Activated CD8-positive, alpha-beta T cell treated with anti-CD3 and anti-CD28 coated beads, Interleukin-2, amount 10 ng/mL, durations not matched to agents 7 days and 5 days (primary cell): ENCODE measurements at regions of chr6 and their contacts with region 1.

Region 1: DNA sequence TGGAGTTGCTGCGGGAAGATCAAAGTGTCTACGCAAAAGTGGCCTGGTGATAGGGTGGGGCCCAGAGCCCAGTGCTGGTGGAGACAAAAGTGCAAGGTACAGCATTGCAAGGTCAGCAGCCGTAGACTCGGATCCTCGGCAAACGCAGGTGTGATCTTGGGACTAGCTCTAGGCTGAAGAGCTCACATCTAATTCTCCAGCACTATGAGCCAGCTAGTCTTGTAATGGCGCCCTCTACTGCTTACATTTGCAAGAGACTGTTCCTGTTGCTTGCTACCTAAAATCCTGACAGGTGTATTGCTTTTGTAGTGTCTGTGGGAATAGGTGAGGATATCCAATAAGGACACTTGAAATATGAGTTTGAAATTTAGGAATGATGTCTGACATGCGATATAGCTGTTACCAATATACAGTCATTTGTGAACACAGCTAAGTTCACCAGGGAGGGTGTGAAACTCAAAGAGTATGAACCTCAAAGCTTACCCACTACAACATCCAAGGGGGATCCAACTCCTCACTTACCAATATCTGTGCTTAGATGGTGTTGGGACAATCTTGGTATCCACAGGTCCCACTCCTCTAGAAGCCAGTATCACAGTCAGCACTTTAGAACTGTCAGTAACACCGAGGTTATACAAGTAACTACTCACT is 58.4 kb downstream of the PDE7B start:
- DNase-seq: peak; percentile 77
- ATAC-seq: peak; percentile 96
- H3K4me3 Mint-ChIP-seq: no peak overlapping the region
- H3K27ac Mint-ChIP-seq: no peak overlapping the region
- H3K4me1 Mint-ChIP-seq: peaks cover 5% of the 10 kb centered on the region
- H3K27me3 Mint-ChIP-seq: no peaks in the 10 kb centered on the region

Region 2: DNA sequence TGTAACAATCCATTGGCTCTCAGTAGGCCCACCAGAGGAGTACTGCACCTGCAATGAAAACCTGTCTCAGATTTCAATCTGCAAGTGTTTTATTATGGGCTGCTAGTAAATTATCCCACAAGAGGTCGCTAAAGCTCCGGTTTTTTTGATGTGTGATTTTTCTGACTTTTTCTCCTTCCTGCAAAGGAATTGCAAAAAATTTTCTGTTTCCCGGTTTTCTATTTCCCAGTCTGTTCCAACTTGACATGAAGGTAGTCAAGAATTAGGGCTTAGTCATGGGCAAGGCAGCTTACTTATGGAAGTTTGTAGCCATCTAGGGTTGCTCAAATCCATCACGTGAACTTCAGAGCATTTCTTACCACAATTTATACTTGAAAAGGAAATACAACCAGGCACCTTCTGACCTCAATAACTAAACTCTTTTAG is 373.9 kb before region 1 on chr6:
- CTCF ChIA-PET with region 1: interaction called, 69 read pairs
- POLR2A ChIA-PET with region 1: no interaction called
- DNase-seq: peak; percentile 48
- ATAC-seq: peak; percentile 72
- H3K4me3 Mint-ChIP-seq: peak overlapping the region; percentile 46
- H3K27ac Mint-ChIP-seq: peak overlapping the region; percentile 43
- H3K4me1 Mint-ChIP-seq: peaks cover 45% of the 10 kb centered on the region
- H3K27me3 Mint-ChIP-seq: no peaks in the 10 kb centered on the region

Region 3: GRCh38 chr6:135680964-135681913 is 228.6 kb before region 1 on chr6:
- CTCF ChIA-PET with region 1: interaction called, 29 read pairs
- POLR2A ChIA-PET with region 1: no interaction called
- DNase-seq: no peak
- ATAC-seq: no peak
- H3K4me3 Mint-ChIP-seq: no peak overlapping the region
- H3K27ac Mint-ChIP-seq: no peak overlapping the region
- H3K4me1 Mint-ChIP-seq: peaks cover 9% of the 10 kb centered on the region
- H3K27me3 Mint-ChIP-seq: no peaks in the 10 kb centered on the region

Region 4: DNA sequence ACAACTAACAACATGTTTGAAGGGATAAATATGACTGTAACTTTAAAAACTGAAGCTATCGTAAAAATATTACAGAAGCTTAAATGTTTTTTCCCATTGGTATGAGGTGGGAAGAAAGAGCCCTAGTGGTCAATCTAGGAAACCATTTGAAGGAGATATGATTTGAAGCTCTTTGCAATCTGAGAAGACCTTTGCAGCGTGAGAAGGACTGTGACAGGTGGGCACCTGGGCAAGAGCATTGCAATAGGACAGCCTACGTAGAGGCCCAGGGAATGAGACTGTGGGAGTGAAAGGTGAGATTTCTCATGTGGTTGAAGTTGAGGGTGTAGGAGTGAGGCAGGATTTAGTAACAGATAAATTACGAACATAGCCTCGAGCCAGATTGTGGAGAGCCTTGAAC is 166.4 kb before region 1 on chr6:
- CTCF ChIA-PET with region 1: interaction called, 10 read pairs
- POLR2A ChIA-PET with region 1: no interaction called
- DNase-seq: no peak
- ATAC-seq: no peak
- H3K4me3 Mint-ChIP-seq: no peak overlapping the region
- H3K27ac Mint-ChIP-seq: no peak overlapping the region
- H3K4me1 Mint-ChIP-seq: no peaks in the 10 kb centered on the region
- H3K27me3 Mint-ChIP-seq: no peaks in the 10 kb centered on the region

Region 5: DNA sequence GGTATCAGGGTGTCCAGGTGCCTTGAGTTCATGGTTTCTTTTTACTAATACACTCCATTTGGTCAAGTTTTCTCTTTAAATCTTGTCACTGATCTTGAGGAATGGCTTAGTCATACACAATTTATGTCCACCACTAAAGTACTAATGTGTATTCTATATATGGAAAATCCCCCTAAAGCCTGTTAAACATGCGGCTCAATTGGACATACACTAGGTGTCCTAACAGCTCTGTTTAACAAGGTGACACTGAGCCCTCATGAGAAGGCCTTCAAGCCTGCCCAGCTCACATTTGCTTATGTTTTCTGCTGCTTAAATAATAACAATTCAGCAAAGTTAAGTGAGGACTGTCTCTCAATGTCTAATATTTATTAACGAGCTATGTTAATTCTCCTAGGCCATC is 26.8 kb before region 1 on chr6:
- CTCF ChIA-PET with region 1: interaction called, 15 read pairs
- POLR2A ChIA-PET with region 1: no interaction called
- DNase-seq: no peak
- ATAC-seq: no peak
- H3K4me3 Mint-ChIP-seq: no peak overlapping the region
- H3K27ac Mint-ChIP-seq: no peak overlapping the region
- H3K4me1 Mint-ChIP-seq: peaks cover 33% of the 10 kb centered on the region
- H3K27me3 Mint-ChIP-seq: no peaks in the 10 kb centered on the region